ENCODE measurements at regions of chr12 and their contacts with region 1.

Region 1: DNA sequence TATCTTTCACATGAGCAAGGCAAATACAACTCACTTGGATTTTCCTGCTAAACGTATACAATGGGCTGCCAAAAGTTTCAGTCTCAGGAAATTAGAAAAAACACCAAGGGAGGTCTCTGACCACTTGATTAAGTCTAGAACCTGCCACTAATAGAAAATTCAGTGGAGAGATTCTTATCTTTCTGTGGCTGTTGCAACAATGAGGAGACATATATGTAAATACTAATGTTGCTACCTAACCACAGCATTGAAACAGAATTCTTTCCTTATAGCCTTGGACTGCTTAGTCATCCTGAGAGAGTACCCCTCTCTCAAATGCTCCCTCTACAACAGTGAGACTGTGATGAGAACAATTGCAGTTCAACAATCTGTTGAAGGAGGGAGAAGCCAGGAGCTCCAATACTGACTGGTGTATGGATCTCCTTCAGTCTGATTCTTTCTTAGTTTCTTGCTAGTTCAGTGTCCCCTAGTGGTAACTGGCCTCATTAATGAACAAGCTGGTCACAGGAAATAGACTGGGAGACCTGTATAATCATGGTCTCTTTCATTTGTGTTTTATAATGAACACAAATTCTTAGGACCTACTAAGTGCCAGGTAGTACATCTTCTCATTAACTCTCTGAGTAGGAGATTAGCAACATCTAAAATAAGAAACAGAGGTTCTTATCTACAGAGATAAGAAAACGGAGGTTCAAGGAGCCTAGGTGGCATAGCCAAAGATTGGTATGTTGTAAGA is 164.5 kb downstream of the SLC38A4 start:
- DNase-seq: no peak
- H3K4me3 Mint-ChIP-seq: no peak overlapping the region
- H3K27ac Mint-ChIP-seq: no peak overlapping the region
- H3K4me1 Mint-ChIP-seq: peaks cover 34% of the 10 kb centered on the region
- H3K27me3 Mint-ChIP-seq: no peaks in the 10 kb centered on the region

Region 2: DNA sequence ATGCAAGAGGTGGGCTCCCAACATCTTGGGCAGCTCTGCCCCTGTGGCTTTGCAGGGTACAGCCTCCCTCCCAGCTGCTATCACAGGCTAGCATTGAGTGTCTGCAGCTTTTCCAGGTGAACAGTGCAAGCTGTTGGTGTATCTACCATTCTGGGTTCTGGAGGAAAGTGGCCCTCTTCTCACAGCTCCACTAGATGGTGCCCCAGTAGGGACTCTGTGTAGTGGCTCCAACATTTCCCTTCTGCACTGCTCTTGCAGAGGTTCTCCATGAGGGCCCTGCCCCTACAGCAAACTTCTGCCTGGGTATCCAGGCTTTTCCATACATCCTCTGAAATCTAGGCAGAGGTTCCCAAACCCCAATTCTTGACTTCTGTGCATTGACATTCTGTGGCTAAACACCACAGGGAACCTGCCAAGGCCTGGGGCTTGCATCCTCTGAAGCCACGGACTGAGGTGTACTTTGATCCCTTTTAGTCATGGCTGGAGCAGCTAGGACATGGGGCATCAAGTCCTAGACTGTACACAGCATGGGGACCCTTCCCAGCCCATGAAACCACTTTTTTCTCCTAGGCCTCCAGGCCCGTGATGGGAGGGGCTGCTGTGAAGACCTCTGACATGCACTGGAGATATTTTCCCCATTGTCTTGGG is 368.4 kb before region 1 on chr12:
- CTCF ChIA-PET with region 1: no interaction called
- POLR2A ChIA-PET with region 1: no interaction called
- intact Hi-C with region 1: no loop called
- DNase-seq: no peak
- H3K4me3 Mint-ChIP-seq: no peak overlapping the region
- H3K27ac Mint-ChIP-seq: no peak overlapping the region
- H3K4me1 Mint-ChIP-seq: no peaks in the 10 kb centered on the region
- H3K27me3 Mint-ChIP-seq: no peaks in the 10 kb centered on the region

Region 3: DNA sequence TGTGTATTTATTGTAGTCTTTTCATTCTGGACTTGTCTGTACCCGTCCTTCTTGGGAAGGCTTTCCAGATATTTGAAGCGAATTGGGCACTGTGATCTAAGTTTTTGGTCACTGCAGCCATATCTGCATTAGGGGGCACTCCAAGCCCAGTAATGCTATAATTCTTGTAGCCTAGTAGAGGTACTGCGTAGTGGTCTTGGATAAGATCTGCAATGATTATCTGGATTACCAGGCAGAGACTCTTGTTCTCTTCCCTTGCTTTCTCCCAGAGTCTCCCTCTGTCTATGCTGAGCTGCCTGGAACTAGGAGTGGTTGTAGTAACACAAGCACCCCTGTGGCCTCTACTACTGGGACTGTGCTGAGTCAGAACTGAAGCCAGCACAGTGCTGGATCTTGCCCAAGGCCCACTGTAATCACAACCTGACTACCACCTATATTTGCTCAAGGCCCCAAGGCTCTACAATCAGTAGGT is 318.7 kb before region 1 on chr12:
- CTCF ChIA-PET with region 1: no interaction called
- POLR2A ChIA-PET with region 1: no interaction called
- intact Hi-C with region 1: loop called (anchors 5 kb)
- DNase-seq: peak; percentile 22
- H3K4me3 Mint-ChIP-seq: no peak overlapping the region
- H3K27ac Mint-ChIP-seq: no peak overlapping the region
- H3K4me1 Mint-ChIP-seq: no peaks in the 10 kb centered on the region
- H3K27me3 Mint-ChIP-seq: peaks cover 8% of the 10 kb centered on the region

Region 4: GRCh38 chr12:46523863-46524770 is 137.2 kb before region 1 on chr12:
- CTCF ChIA-PET with region 1: interaction called, 6 read pairs
- POLR2A ChIA-PET with region 1: interaction called, 3 read pairs
- intact Hi-C with region 1: loop called (anchors 2 kb)
- DNase-seq: peak; percentile 74
- H3K4me3 Mint-ChIP-seq: peak overlapping the region; percentile 65
- H3K27ac Mint-ChIP-seq: peak overlapping the region; percentile 90
- H3K4me1 Mint-ChIP-seq: peaks cover 30% of the 10 kb centered on the region
- H3K27me3 Mint-ChIP-seq: no peaks in the 10 kb centered on the region

Region 5: GRCh38 chr12:46556105-46556559 is 105.1 kb before region 1 on chr12:
- CTCF ChIA-PET with region 1: interaction called, 3 read pairs
- POLR2A ChIA-PET with region 1: no interaction called
- intact Hi-C with region 1: loop called (anchors 5 kb)
- DNase-seq: no peak
- H3K4me3 Mint-ChIP-seq: no peak overlapping the region
- H3K27ac Mint-ChIP-seq: no peak overlapping the region
- H3K4me1 Mint-ChIP-seq: peaks cover 34% of the 10 kb centered on the region
- H3K27me3 Mint-ChIP-seq: no peaks in the 10 kb centered on the region

Region 6: DNA sequence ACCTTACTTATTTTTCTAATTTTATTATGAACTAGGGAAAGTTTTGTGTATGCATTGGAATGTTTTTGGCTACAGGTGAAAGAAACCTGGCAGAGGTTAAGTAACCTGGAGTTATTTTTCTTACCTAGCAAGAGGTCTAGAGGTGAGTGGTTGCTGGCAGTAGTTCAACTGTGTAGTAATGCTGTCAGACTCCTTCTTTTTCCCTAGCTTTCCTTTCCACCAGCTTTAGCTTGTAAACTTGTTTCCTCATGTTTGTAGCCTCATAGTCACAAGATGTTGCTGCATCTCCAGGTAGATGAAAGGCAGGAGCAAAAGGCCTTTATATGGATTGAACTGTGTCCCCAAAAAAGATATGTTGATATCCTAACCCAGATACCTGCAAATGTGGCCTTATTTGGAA is 523.5 kb after region 1 on chr12:
- CTCF ChIA-PET with region 1: no interaction called
- POLR2A ChIA-PET with region 1: no interaction called
- intact Hi-C with region 1: no loop called
- DNase-seq: no peak
- H3K4me3 Mint-ChIP-seq: no peak overlapping the region
- H3K27ac Mint-ChIP-seq: no peak overlapping the region
- H3K4me1 Mint-ChIP-seq: peaks cover 45% of the 10 kb centered on the region
- H3K27me3 Mint-ChIP-seq: no peaks in the 10 kb centered on the region

Measured in activated CD4-positive, alpha-beta memory T cell treated with anti-CD3 and anti-CD28 coated beads for 36 hours (primary cell).